Caco-2 (cell line): ENCODE measurements at regions of chr2 and their contacts with region 1.

Region 1: DNA sequence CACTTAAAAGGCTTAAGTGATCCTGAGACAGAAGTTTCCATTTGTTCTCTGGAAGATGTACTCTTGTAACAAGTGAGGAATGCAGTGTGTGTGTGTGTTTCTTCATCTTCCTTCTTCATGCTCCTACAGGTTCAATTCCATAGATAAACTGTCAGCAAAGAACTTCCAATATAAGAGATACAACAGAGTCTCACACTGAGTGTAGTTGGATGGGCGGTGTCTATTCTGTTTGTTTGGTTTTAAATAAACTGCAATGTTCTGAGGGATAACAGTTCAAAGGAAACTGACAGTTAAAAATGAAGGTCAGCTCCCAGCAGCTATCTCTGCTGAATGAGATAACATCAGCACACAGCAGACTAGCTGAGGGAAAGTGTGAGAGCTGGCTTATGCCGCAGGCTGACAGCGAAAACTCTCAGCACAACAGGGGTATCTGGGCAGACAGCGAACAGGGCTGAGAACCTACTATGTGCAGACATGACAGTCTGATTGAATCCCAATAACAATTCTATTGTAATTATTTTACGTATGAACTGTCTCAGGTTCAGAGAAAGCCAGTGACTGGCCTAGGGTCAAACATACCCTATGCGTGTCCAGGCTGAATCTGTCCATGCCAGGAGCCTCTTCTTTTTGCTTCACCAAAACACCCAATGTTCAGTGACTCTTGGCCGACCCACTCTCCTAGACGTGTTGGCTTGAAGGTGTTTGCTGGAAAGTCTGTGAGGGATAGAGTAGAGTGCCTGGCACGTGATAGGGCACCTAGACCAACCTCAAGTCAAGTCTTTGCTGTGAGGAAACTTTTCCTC is 201.9 kb upstream of the TRIB2 start:
- DNase-seq: peak; percentile 49 to 58
- H3K4me3 ChIP-seq: no peak overlapping the region
- H3K4me3 Mint-ChIP-seq: peak overlapping the region; percentile 20
- H3K27ac Mint-ChIP-seq: no peak overlapping the region
- H3K4me1 ChIP-seq: peaks cover 27% of the 10 kb centered on the region
- H3K4me1 Mint-ChIP-seq: peaks cover 25% of the 10 kb centered on the region
- H3K27me3 ChIP-seq: no peaks in the 10 kb centered on the region
- H3K27me3 Mint-ChIP-seq: peaks cover 5% of the 10 kb centered on the region
- CTCF ChIP-seq: no peak

Region 2: DNA sequence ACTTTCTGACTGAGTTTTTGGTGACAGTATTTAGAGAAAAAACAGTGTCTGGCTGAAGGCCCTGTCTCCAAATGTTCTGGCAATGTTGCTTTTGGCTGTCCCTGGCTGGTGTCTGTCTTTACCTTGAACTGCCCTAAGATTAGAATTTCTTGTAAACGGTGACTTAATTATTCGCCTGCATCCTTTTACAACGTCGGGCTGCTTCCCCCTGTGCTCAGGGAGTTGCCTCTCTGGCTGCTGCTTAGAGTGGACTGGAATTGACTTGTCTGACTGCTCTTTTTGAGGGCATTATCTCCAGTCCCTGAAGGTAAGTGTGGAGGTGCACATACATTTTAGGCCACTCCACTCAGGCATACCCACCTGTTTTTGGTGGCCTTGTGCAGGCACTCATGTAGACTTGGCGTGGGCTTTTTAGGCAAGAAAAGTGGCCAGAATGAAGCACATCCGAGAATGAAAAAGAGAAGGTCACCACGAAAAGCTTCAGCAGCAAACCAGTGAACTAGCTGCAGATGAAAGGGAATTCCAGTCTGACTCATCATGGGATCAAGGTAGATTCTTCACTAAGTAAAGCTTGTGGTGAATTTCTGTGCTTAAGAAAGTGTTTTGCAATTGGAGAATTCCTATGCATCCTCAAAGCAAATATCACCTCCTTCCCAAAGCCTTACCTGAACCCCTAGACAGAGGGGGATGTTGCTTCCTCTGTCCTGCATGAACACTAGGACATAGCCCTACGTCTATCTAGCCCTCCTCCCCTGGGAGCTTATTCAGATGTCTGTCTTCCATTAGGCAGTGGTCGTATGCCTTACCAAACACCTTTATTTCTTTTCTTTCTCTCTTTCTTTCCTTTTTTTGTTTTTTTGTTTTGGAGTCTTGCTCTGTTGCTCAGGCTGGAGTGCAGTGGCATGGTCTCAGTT is 28.4 kb before region 1 on chr2:
- CTCF ChIA-PET with region 1: no interaction called
- POLR2A ChIA-PET with region 1: no interaction called
- intact Hi-C with region 1: loop called (anchors 1 kb)
- DNase-seq: peak in 1 of 2 experiments; percentile 47
- H3K4me3 ChIP-seq: no peak overlapping the region
- H3K4me3 Mint-ChIP-seq: no peak overlapping the region
- H3K27ac Mint-ChIP-seq: peak overlapping the region; percentile 60
- H3K4me1 ChIP-seq: peaks cover 24% of the 10 kb centered on the region
- H3K4me1 Mint-ChIP-seq: peaks cover 19% of the 10 kb centered on the region
- H3K27me3 ChIP-seq: no peaks in the 10 kb centered on the region
- H3K27me3 Mint-ChIP-seq: no peaks in the 10 kb centered on the region
- CTCF ChIP-seq: no peak

Region 3: GRCh38 chr2:12534646-12535263 is 19.9 kb after region 1 on chr2:
- CTCF ChIA-PET with region 1: no interaction called
- POLR2A ChIA-PET with region 1: no interaction called
- intact Hi-C with region 1: no loop called
- DNase-seq: no peak
- H3K4me3 ChIP-seq: no peak overlapping the region
- H3K4me3 Mint-ChIP-seq: no peak overlapping the region
- H3K27ac Mint-ChIP-seq: peak overlapping the region; percentile 33
- H3K4me1 ChIP-seq: peaks cover 25% of the 10 kb centered on the region
- H3K4me1 Mint-ChIP-seq: peaks cover 37% of the 10 kb centered on the region
- H3K27me3 ChIP-seq: no peaks in the 10 kb centered on the region
- H3K27me3 Mint-ChIP-seq: no peaks in the 10 kb centered on the region
- CTCF ChIP-seq: no peak